Spleen (tissue), 13 donors: ENCODE measurements at regions of chr20 and their contacts with region 1.

Region 1: GRCh38 chr20:54199721-54200176 is 8.1 kb upstream of the PFDN4 start:
- DNase-seq: peak; percentile 86
- H3K4me3 ChIP-seq: no peak overlapping the region
- H3K27ac ChIP-seq: no peak overlapping the region
- H3K4me1 ChIP-seq: no peaks in the 10 kb centered on the region
- H3K27me3 ChIP-seq: no peaks in the 10 kb centered on the region
- CTCF ChIP-seq: peak; percentile 54 to 86 (median 79)
- POLR2A ChIP-seq: no peak

Region 2: GRCh38 chr20:54097236-54097529 is 102.6 kb before region 1 on chr20:
- intact Hi-C with region 1: loop called (anchors 5 kb)
- DNase-seq: no peak
- H3K4me3 ChIP-seq: no peak overlapping the region
- H3K27ac ChIP-seq: no peak overlapping the region
- H3K4me1 ChIP-seq: no peaks in the 10 kb centered on the region
- H3K27me3 ChIP-seq: peaks cover 0 to 14% (median 0%) of the 10 kb centered on the region in 7 donors
- CTCF ChIP-seq: no peak
- POLR2A ChIP-seq: no peak